ENCODE measurements at regions of chr5 and their contacts with region 1.

Region 1: GRCh38 chr5:54135042-54135441 is 175.3 kb downstream of the ARL15 start:
- DNase-seq: no peak
- H3K4me3 ChIP-seq: no peak overlapping the region
- CTCF ChIP-seq: no peak

Region 2: GRCh38 chr5:54148067-54148466 is 13.0 kb after region 1 on chr5:
- CTCF ChIA-PET with region 1: interaction called, 17 read pairs
- POLR2A ChIA-PET with region 1: no interaction called
- DNase-seq: no peak
- H3K4me3 ChIP-seq: no peak overlapping the region
- CTCF ChIP-seq: peak; percentile 37

Region 3: GRCh38 chr5:54206580-54207229 is 71.7 kb after region 1 on chr5:
- CTCF ChIA-PET with region 1: no interaction called
- POLR2A ChIA-PET with region 1: no interaction called
- DNase-seq: no peak
- H3K4me3 ChIP-seq: no peak overlapping the region
- CTCF ChIP-seq: no peak

Measured in AG04449 (cell line).